ENCODE measurements at regions of chr7 and their contacts with region 1.

Region 1: DNA sequence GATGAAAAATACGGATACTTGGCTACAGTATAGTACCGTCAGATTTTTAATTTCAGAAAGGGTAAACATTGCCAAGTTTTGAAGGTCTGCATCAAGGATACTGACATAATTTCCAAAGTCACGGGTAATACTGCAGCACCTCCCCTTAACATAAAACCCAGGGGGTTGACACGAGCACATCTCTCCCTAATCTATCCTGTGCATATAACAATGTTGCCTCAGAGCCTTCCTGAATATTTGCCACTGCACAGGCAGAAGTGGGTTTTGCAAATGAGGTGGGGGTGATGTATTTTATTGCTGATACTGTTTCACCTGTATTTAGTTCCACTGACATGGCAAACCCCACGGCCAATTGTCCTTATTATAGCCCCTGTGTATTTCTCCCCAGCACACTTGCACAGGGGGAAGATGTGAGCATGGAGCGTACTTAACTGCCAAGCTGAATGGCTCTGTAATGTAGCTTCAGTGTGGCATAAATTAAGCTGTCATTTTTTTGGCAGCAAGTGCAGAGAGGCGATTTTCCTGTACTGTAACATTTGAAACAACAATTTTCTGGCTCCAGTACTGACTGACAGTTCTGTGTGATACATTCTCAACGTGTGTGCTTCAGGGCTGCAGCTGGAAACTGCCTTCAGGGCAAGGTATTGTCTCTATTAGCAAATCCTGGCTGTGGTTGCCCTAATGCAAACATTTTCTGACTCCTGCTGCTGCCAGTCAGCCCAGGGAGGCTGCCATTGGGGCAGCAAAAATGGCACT is 299.6 kb upstream of the SP4 start:
- DNase-seq: no peak
- ATAC-seq: no peak
- H3K4me3 ChIP-seq: no peak overlapping the region
- H3K27ac ChIP-seq: no peak overlapping the region
- H3K4me1 ChIP-seq: no peaks in the 10 kb centered on the region
- H3K27me3 ChIP-seq: no peaks in the 10 kb centered on the region

Region 2: DNA sequence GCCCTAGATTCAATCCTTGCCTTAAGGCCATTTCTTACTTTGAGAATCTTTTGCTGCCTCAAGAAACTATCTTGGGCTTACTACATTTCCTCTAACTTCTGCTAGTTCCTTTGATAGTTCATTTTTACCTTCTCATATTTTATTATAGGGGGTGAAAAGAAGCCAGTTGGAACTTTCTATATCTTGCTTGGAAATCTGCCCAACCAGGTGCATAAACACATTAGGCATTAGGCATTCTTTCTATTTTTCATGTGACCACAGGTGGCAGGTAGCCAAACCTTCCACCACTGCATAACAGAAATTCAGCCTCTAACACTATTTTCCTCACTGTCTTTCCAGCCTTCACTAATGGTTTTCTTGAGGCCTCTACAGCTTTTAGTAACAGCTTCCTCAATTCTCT is 41.6 kb before region 1 on chr7:
- intact Hi-C with region 1: loop called in 1 of 2 experiments (anchors 2 kb)
- DNase-seq: no peak
- ATAC-seq: no peak
- H3K4me3 ChIP-seq: no peak overlapping the region
- H3K27ac ChIP-seq: no peak overlapping the region
- H3K4me1 ChIP-seq: no peaks in the 10 kb centered on the region
- H3K27me3 ChIP-seq: no peaks in the 10 kb centered on the region

Region 3: GRCh38 chr7:21184937-21185651 is 56.9 kb after region 1 on chr7:
- intact Hi-C with region 1: no loop called
- DNase-seq: no peak
- ATAC-seq: no peak
- H3K4me3 ChIP-seq: no peak overlapping the region
- H3K27ac ChIP-seq: no peak overlapping the region
- H3K4me1 ChIP-seq: no peaks in the 10 kb centered on the region
- H3K27me3 ChIP-seq: no peaks in the 10 kb centered on the region

Measured in aorta (tissue), 5 donors.